ENCODE measurements at regions of chr5 and their contacts with region 1.

Region 1: GRCh38 chr5:109105631-109106267 is 304.0 kb downstream of the PJA2 start:
- DNase-seq: peak; percentile 97
- H3K4me3 ChIP-seq: peak overlapping the region in 1 of 3 experiments; percentile 16
- H3K27ac ChIP-seq: peak overlapping the region; percentile 89
- H3K4me1 ChIP-seq: peaks cover 21% of the 10 kb centered on the region
- H3K27me3 ChIP-seq: no peaks in the 10 kb centered on the region
- CTCF ChIP-seq: no peak
- POLR2A ChIP-seq: no peak

Region 2: GRCh38 chr5:108788142-108788541 is 317.6 kb before region 1 on chr5:
- CTCF ChIA-PET with region 1: no interaction called
- POLR2A ChIA-PET with region 1: no interaction called
- dilution Hi-C with region 1: no loop called
- intact Hi-C with region 1: no loop called
- DNase-seq: no peak
- H3K4me3 ChIP-seq: no peak overlapping the region
- H3K27ac ChIP-seq: no peak overlapping the region
- H3K4me1 ChIP-seq: no peaks in the 10 kb centered on the region
- H3K27me3 ChIP-seq: no peaks in the 10 kb centered on the region
- CTCF ChIP-seq: no peak
- POLR2A ChIP-seq: no peak

Region 3: GRCh38 chr5:109038209-109038840 is 67.4 kb before region 1 on chr5:
- CTCF ChIA-PET with region 1: interaction called, 3 read pairs
- POLR2A ChIA-PET with region 1: no interaction called
- dilution Hi-C with region 1: no loop called
- intact Hi-C with region 1: loop called (anchors 5 kb)
- DNase-seq: peak; percentile 75
- H3K4me3 ChIP-seq: no peak overlapping the region
- H3K27ac ChIP-seq: peak overlapping the region; percentile 55
- H3K4me1 ChIP-seq: peaks cover 12% of the 10 kb centered on the region
- H3K27me3 ChIP-seq: no peaks in the 10 kb centered on the region
- CTCF ChIP-seq: no peak
- POLR2A ChIP-seq: no peak

Region 4: DNA sequence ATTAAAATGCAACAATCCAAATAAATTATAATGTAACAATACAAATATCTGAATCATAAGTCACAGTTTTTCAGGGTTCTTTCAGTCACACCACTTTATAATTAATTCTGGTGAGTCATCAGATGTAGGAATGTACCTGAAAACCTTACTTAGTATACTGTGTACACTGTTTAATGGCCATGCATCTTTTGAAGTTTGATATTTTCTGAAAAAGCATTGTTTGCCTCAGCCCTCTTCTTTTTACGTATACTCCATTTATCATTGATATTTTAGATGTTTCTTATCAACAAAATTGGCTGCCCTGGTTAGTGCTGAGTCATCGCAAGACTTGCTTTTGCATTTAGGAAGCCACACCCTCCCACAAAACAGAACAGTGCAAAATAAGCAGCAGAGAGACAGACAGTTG is 85.4 kb after region 1 on chr5:
- CTCF ChIA-PET with region 1: no interaction called
- POLR2A ChIA-PET with region 1: no interaction called
- dilution Hi-C with region 1: no loop called
- intact Hi-C with region 1: loop called (anchors 5 kb)
- DNase-seq: peak; percentile 78
- H3K4me3 ChIP-seq: no peak overlapping the region
- H3K27ac ChIP-seq: peak overlapping the region; percentile 56
- H3K4me1 ChIP-seq: peaks cover 15% of the 10 kb centered on the region
- H3K27me3 ChIP-seq: no peaks in the 10 kb centered on the region
- CTCF ChIP-seq: no peak
- POLR2A ChIP-seq: no peak

Region 5: DNA sequence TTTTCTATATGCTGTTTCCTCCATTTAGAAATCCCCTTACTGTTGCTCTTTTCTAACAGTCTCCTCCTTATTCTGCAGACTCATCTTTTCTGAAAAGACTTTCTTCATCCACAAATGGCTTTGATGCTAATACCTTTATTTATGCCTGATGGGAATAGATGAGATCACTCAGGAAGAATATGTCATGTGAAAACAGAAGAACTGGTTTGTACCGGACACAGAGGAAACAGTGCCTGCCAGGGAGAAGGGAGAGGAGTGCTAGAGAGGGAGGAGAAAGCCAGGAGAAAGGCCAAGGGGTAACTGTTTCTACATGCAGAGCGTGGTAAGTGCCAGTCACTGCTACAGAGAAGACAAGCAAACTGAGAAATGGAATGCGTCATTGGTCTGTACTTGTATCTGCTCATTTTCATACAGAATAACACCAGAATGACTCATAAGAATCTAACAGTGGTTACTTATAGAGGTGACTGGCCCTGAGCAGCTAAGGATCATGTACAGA is 349.9 kb after region 1 on chr5:
- CTCF ChIA-PET with region 1: no interaction called
- POLR2A ChIA-PET with region 1: no interaction called
- dilution Hi-C with region 1: no loop called
- intact Hi-C with region 1: loop called (anchors 1 kb)
- DNase-seq: peak; percentile 98
- H3K4me3 ChIP-seq: no peak overlapping the region
- H3K27ac ChIP-seq: peak overlapping the region; percentile 76
- H3K4me1 ChIP-seq: peaks cover 21% of the 10 kb centered on the region
- H3K27me3 ChIP-seq: no peaks in the 10 kb centered on the region
- CTCF ChIP-seq: no peak
- POLR2A ChIP-seq: no peak

Measured in endothelial cell of umbilical vein (primary cell).